ENCODE measurements at regions of chr9 and their contacts with region 1.

Region 1: GRCh38 chr9:134378901-134379338 is 52.7 kb downstream of the RXRA start:
- DNase-seq: peak; percentile 82 to 87
- ATAC-seq: peak; percentile 29 to 53 (median 41)
- H3K4me3 ChIP-seq: peak overlapping the region; percentile 49
- H3K27ac ChIP-seq: peak overlapping the region; percentile 92
- H3K4me1 ChIP-seq: peaks cover 100% of the 10 kb centered on the region
- H3K27me3 ChIP-seq: no peaks in the 10 kb centered on the region
- CTCF ChIP-seq: no peak

Region 2: GRCh38 chr9:134325817-134326723 is 52.9 kb before region 1 on chr9 and contains the start of gene RXRA:
- intact Hi-C with region 1: loop called in 1 of 2 experiments (anchors 2 kb)
- DNase-seq: peak; percentile 90 to 95
- ATAC-seq: peak; percentile 54 to 58 (median 56)
- H3K4me3 ChIP-seq: peak within 1 kb of the TSS; percentile 92
- H3K27ac ChIP-seq: peak within 1 kb of the TSS; percentile 98
- H3K4me1 ChIP-seq: peaks cover 39% of the 10 kb centered on the region
- H3K27me3 ChIP-seq: no peaks in the 10 kb centered on the region
- CTCF ChIP-seq: no peak
- total RNA-seq, gene RXRA: 84.3 to 192 (median 147) TPM

Region 3: GRCh38 chr9:134413890-134414731 is 35.2 kb after region 1 on chr9:
- intact Hi-C with region 1: loop called (anchors 2 to 5 kb)
- DNase-seq: peak; percentile 79 to 94
- ATAC-seq: peak; percentile 63 to 78 (median 70)
- H3K4me3 ChIP-seq: peak overlapping the region; percentile 31
- H3K27ac ChIP-seq: peak overlapping the region; percentile 81
- H3K4me1 ChIP-seq: peaks cover 86% of the 10 kb centered on the region
- H3K27me3 ChIP-seq: no peaks in the 10 kb centered on the region
- CTCF ChIP-seq: no peak

Region 4: GRCh38 chr9:134492281-134492691 is 113.4 kb after region 1 on chr9:
- intact Hi-C with region 1: no loop called
- DNase-seq: peak in 1 of 2 donors; percentile 63
- ATAC-seq: peak in 3 of 4 donors; percentile 34 to 54 (median 37)
- H3K4me3 ChIP-seq: no peak overlapping the region
- H3K27ac ChIP-seq: no peak overlapping the region
- H3K4me1 ChIP-seq: no peaks in the 10 kb centered on the region
- H3K27me3 ChIP-seq: peaks cover 0 to 38% (median 9%) of the 10 kb centered on the region in 3 donors
- CTCF ChIP-seq: no peak

Region 5: DNA sequence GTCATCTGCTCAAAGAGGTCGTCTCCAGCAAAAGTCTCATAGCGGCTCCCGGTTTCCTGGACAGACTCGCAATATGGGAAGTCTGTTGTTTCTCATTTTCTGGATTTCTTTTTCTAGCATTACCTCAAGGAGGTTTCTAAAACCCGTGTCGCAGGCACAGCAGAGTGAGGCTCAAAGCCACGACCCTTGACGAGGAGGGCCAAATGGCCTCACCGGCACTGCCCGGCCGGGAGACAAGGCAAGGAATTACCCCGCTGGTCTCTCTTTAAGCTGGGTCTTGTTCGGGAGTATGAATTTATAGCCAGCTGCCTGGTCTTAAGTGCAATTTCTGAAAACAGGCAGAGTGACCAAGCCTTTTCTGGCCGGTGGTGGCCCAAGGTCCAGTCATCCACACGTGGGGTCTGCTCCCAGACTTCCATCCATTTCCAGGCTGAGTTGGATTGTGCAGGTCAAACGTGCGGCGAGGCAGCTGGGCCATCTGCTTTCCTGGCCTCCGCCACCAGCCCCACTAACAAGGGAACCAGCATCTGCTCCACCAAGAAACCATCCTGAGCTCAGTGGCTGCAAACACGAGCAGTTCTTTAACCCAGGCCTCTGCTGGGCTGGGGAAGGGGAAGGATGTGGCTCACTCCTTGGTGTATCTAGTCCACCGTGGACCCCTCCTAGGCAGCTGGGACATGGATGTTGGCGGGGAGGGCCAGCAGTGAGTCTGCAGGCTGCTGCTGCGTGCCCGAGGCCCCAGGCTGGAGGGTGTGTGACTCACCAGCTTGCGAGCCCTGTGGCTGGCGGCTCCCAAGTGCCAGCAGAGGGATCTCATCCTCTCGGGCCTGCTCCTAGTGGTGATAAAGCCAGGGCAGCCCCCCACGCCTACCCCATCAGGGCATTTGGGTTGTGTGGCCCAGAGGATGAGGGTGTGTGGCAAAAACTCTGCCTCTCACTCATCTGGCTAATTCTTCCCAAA is 207.1 kb after region 1 on chr9:
- intact Hi-C with region 1: no loop called
- DNase-seq: no peak
- ATAC-seq: no peak
- H3K4me3 ChIP-seq: no peak overlapping the region
- H3K27ac ChIP-seq: no peak overlapping the region
- H3K4me1 ChIP-seq: no peaks in the 10 kb centered on the region
- H3K27me3 ChIP-seq: peaks cover 0 to 7% (median 2%) of the 10 kb centered on the region in 3 donors
- CTCF ChIP-seq: no peak

Measured in psoas muscle (tissue), 8 donors.